Adrenal gland (tissue), 19 donors: ENCODE measurements at regions of chr12 and their contacts with region 1.

Region 1: DNA sequence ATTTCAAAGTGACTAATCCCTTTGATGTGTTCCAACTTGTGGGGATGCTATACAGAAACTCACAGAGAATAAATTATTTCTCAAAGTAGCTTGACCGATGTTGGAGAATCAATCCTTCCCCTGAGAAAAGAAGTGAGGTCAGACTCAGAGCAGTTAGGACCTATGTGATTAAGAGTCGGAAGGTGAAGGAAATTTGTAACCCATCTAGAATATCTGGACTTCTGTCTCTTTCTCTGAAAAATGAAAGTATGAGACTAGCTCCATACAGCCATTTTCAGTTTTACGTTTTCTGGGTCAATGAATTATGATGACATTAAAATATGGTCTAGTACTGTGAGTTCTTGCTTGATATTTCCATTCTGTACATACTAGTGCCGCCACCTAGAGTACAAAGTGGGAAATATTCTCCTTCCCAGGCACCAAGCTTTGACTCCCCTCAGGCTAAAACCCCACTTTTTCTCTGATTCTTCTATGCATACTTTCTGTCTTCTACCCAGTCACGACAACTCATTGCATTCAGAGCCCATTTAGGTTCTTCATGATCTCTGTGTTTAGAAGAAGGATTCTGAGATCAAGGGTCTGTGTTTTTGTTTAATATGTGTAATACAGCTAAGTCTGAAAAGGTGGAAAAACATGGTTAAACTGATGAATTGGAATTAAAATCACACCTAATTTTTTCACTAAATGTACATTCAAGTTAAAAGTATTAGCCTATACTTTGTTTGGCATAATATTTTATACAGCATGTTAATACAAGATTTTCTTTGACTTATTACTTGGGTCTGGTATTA is 6.9 kb upstream of the NTS start:
- DNase-seq: peak in 6 of 7 donors; percentile 12 to 65 (median 43)
- H3K4me3 ChIP-seq: peak overlapping the region in 2 of 4 donors; percentile 7 to 43
- H3K27ac ChIP-seq: no peak overlapping the region
- H3K4me1 ChIP-seq: no peaks in the 10 kb centered on the region
- H3K27me3 ChIP-seq: no peaks in the 10 kb centered on the region
- CTCF ChIP-seq: peak; percentile 69 to 90 (median 84)
- POLR2A ChIP-seq: no peak

Region 2: DNA sequence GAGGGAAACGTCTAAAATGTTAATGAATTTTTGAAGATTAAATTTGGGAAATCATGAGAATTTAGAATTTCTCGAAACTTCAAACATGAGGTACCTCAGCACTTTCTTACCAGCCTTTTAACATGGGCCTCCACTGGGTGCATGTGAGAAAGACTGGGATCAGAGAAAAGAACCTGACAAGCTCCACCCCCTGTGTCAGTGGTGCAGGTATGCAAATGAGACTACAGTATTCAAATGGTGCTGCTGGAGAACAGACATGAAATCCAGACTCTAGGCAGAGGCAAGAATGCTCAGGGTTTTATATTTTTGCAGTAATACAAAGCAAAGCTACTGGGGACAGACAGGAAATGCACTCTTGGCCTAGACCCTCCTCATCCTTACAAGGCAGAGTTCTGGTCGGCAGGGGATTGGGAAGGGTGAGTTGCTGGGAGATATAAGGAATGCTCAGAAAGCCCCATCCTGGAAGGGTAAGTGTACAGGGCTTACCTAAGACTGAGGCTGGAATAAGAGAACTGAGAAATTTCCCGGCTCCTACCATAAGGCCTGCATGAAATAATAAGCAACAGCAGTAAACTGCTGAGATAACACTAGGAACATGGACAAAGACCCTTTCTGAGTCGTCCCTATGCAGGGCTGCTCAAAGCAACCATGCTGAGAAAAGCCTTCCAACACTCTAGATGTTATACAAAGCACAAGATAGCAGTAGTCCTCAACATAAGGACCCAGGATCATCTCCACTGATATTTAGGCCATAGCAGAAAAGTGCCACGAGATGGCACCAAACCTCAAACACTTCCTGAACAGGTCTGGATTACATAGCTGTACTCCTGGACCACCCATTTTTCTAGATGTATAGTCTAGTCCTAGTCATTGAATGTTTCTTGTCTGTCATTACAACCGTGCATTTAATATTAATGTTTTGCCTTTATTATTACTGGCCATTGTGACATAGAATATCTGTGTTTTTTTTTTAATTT is 291.8 kb before region 1 on chr12:
- intact Hi-C with region 1: loop called (anchors 5 to 10 kb)
- DNase-seq: peak; percentile 38 to 82 (median 53)
- H3K4me3 ChIP-seq: no peak overlapping the region
- H3K27ac ChIP-seq: no peak overlapping the region
- H3K4me1 ChIP-seq: no peaks in the 10 kb centered on the region
- H3K27me3 ChIP-seq: no peaks in the 10 kb centered on the region
- CTCF ChIP-seq: peak; percentile 45 to 75 (median 72)
- POLR2A ChIP-seq: no peak